Breast epithelium (tissue), 4 donors: ENCODE measurements at regions of chr3 and their contacts with region 1.

Region 1: DNA sequence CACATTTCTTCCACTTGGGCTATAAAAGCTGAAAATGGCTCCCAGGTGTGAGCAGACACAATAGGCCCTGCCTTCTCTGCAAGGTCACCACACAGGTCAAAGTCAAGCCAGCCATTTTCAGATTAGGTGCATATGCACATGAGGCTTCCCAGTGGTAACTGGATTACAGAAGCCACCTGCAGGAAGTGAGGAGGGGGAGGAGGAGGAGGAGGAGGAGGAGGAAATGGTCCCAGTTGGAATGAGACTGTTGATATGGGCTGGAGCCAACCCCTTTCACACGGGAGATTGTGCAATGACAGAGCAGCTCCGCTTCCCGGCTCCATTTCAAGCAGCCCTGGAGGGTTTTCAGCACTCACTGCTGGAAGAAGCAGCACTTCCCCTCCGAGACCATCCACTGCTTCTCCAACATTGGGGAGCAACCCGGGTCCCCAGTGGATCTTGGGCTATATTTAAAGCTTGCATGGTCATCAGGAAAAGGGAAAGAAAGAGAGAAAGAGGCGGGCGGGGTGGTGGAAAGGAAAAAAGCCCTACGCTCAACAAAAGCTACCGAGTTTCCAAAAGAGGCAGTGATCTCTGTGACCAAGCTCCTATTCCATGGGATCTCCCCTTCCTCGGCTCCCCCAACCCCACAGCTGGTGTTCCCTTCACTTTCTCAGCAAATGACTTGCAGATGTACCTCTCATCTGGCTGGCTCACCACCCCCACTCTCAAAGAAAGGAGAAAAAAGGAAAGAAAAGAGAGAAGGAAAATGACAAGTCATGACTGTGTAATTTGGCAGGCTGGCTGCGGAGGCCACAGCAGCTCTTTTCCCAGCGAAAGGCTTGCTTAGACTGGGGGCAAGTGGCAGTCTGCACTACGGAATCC is 58.3 kb downstream of the LRIG1 start:
- DNase-seq: peak in 1 of 2 donors; percentile 56
- H3K4me3 ChIP-seq: peak overlapping the region in 1 of 3 donors; percentile 15
- H3K27ac ChIP-seq: peak overlapping the region; percentile 83 to 90
- H3K4me1 ChIP-seq: peaks cover 8 to 28% of the 10 kb centered on the region in 2 donors
- H3K27me3 ChIP-seq: no peaks in the 10 kb centered on the region
- CTCF ChIP-seq: no peak
- POLR2A ChIP-seq: no peak

Region 2: GRCh38 chr3:66413151-66413751 is 29.2 kb before region 1 on chr3:
- intact Hi-C with region 1: loop called (anchors 1 kb)
- DNase-seq: no peak
- H3K4me3 ChIP-seq: no peak overlapping the region
- H3K27ac ChIP-seq: peak overlapping the region in 1 of 2 donors; percentile 9
- H3K4me1 ChIP-seq: peaks cover 0 to 4% of the 10 kb centered on the region in 2 donors
- H3K27me3 ChIP-seq: no peaks in the 10 kb centered on the region
- CTCF ChIP-seq: no peak
- POLR2A ChIP-seq: no peak

Region 3: DNA sequence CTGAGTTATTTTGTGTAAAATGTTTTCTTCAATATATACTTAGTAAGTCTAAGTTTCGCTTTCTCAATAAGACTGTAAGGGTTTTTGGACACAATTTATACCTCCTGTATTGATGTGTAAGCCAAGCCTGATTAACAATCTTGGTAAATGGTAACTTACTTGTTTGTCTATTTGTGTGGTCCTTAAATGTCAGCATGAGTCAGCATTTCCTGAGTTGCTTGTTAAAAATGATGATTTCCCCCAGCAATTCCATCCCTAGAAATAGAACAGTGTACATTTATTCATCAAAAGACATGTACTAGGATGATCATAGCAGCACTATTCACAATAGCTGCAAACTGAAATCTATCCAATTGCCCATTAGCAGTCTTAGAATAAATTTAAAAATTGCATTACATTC is 111.7 kb after region 1 on chr3:
- intact Hi-C with region 1: no loop called
- DNase-seq: no peak
- H3K4me3 ChIP-seq: no peak overlapping the region
- H3K27ac ChIP-seq: no peak overlapping the region
- H3K4me1 ChIP-seq: no peaks in the 10 kb centered on the region
- H3K27me3 ChIP-seq: no peaks in the 10 kb centered on the region
- CTCF ChIP-seq: no peak
- POLR2A ChIP-seq: no peak